ENCODE measurements at regions of chr12 and their contacts with region 1.

Region 1: GRCh38 chr12:53744751-53745150 is 7.0 kb downstream of the CISTR start:
- DNase-seq: no peak
- ATAC-seq: no peak
- H3K4me3 Mint-ChIP-seq: peak overlapping the region in 1 of 10 donors; percentile 7
- H3K27ac Mint-ChIP-seq: no peak overlapping the region
- H3K4me1 Mint-ChIP-seq: peaks cover 9 to 25% (median 14%) of the 10 kb centered on the region in 4 donors
- H3K27me3 Mint-ChIP-seq: peaks cover 0 to 60% (median 41%) of the 10 kb centered on the region in 5 donors

Region 2: DNA sequence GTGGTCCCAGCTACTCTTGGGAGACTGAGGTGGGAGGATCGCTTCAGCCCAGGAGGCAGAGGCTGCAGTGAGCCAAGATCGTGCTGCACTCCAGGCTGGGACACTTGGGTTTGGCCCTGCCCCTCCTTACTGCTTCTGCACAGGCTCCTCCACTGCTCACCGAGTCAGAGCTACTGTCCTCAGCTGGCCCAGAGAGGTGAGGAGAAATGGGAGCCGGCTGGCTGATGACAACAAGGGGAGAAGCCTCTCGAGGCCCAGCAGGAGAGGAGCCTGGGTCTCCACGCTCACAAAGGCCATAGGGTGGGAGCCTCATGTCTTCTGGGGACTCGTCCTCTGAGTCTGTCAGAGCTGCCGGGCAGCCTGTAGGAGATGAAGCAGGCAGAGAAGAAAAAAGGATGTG is 31.2 kb before region 1 on chr12:
- POLR2A ChIA-PET with region 1: no interaction called
- DNase-seq: no peak
- ATAC-seq: no peak
- H3K4me3 Mint-ChIP-seq: no peak overlapping the region
- H3K27ac Mint-ChIP-seq: peak overlapping the region in 1 of 10 donors; percentile 50
- H3K4me1 Mint-ChIP-seq: peaks cover 0 to 4% (median 2%) of the 10 kb centered on the region in 4 donors
- H3K27me3 Mint-ChIP-seq: no peaks in the 10 kb centered on the region

Region 3: GRCh38 chr12:54028314-54029201 is 283.8 kb after region 1 on chr12 and contains the start of gene HOXC6:
- POLR2A ChIA-PET with region 1: no interaction called
- DNase-seq: no peak
- ATAC-seq: no peak
- H3K4me3 Mint-ChIP-seq: peak within 1 kb of the TSS in 4 of 10 donors; percentile 19 to 63 (median 52)
- H3K27ac Mint-ChIP-seq: peak within 1 kb of the TSS in 1 of 10 donors; percentile 53
- H3K4me1 Mint-ChIP-seq: peaks cover 16 to 45% (median 27%) of the 10 kb centered on the region in 4 donors
- H3K27me3 Mint-ChIP-seq: peaks cover 43 to 98% (median 74%) of the 10 kb centered on the region in 5 donors
- polyA plus RNA-seq, gene HOXC6: not detected

Region 4: GRCh38 chr12:54220092-54220557 is 475.4 kb after region 1 on chr12:
- POLR2A ChIA-PET with region 1: interaction called, 11 read pairs
- DNase-seq: peak; percentile 45 to 77 (median 60)
- ATAC-seq: peak; percentile 40 to 46
- H3K4me3 Mint-ChIP-seq: no peak overlapping the region
- H3K27ac Mint-ChIP-seq: no peak overlapping the region
- H3K4me1 Mint-ChIP-seq: peaks cover 15 to 40% (median 29%) of the 10 kb centered on the region in 4 donors
- H3K27me3 Mint-ChIP-seq: peaks cover 0 to 9% (median 6%) of the 10 kb centered on the region in 5 donors